Common myeloid progenitor, CD34-positive (primary cell): ENCODE measurements at regions of chr17 and their contacts with region 1.

Region 1: DNA sequence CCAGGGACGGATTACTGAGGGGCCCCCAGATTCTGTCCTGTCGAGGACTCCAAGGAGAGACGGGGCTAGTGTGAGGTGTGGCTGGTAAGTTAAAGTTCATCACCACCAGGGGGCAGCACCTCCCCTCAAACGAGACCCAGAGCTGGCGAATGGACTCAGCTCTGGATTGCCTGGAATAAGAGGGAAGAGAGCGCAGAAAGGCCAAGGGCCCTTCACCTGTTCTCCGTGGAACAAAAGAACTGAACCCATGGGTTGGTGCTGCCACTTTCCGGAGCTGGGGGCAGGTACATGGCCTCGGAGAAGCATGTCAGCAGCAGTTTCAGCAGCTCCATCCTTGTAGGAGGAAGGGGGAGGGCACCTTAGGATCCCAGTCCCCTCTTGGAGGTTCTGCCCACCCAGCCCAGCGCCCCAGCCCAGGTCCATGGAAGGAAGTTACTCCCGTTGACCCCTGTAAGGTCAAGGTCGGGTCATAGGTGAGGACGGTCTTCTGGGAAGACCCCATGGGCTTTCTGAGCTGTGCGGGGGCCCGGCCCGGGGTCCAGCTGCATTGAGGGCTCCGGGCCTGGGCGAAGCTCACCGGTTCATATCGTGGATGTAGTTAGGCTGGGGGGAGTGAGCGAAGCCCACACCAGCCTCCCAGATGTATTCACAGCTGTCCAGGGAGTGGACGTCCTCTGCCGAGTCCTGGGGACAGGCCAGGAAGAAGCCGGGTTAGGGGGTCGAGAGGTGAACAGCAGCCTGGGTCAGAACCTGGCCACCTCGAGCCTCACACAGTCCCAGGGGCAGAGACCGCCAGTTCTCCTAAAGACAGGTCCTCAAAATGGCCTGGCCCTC is 10.7 kb downstream of the HID1 start:
- DNase-seq: peak; percentile 80 to 88 (median 81)
- H3K4me3 ChIP-seq: no peak overlapping the region
- H3K27ac ChIP-seq: no peak overlapping the region
- H3K4me1 ChIP-seq: peaks cover 0 to 6% (median 3%) of the 10 kb centered on the region in 4 experiments
- H3K27me3 ChIP-seq: peaks cover 0 to 4% (median 2%) of the 10 kb centered on the region in 5 experiments

Region 2: DNA sequence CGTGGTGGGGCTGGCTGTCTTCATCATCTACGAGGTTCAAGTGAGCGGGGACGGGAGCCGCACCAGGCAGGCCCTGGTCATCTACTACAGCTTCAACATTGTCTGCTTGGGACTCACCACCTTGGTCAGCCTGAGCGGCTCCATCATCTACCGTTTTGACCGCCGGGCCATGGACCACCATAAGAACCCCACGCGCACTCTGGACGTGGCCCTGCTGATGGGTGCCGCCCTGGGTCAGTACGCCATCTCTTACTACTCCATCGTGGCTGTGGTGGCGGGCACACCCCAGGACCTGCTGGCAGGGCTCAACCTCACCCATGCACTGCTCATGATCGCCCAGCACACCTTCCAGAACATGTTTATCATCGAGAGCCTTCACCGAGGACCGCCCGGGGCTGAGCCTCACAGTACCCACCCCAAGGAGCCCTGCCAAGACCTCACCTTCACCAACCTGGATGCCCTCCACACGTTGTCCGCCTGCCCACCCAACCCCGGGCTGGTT is 31.3 kb before region 1 on chr17:
- CTCF ChIA-PET with region 1: interaction called, 64 read pairs
- POLR2A ChIA-PET with region 1: no interaction called
- DNase-seq: no peak
- H3K4me3 ChIP-seq: no peak overlapping the region
- H3K27ac ChIP-seq: no peak overlapping the region
- H3K4me1 ChIP-seq: peaks cover 0 to 10% (median 1%) of the 10 kb centered on the region in 4 experiments
- H3K27me3 ChIP-seq: peaks cover 0 to 41% (median 24%) of the 10 kb centered on the region in 5 experiments

Region 3: DNA sequence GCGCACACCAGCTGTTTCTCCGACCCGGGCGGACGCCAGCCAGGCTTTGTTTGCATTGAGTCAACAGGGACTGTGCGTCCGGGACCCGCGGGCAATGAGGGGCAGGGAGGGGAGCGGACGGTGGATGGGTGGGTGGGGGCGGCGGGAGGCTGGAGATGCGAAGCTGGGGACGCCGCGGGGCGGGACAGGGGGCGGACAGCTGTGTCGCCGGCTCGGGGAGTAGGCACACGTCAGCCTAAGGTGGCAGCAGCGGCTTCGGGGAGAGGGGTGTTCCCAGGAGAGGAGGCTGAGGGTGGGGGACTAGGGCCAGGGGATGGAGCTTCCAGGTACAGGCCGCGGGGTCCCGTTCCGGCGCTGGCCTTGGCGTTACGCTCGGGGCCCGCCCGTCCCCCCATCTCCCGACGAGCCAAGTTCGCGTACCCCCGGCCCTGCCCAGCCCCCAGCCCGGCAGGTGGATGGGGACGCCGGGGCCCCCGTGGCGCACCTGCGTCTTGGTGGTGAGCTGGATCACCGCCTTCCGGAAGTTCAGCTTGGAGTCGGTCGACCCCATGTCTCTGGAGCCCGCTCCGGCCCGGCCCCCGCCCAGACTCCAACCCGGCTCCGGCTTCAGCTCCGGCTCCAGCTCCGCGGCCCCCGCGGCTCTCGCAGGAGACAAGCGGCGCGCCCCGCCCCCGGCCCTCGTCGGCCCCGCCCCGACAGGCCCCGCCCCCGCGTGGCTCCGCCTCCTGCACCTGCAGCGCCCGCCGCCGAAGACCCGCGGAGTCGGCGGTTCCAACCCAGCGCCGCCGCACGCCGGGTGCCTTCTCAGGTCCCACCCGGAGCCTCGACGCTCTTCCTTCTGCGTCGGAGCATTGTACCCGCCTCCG is 10.5 kb after region 1 on chr17 and contains the start of gene HID1:
- CTCF ChIA-PET with region 1: interaction called, 49 read pairs
- POLR2A ChIA-PET with region 1: interaction called, 3 read pairs
- DNase-seq: peak; percentile 47 to 75 (median 70)
- H3K4me3 ChIP-seq: peak within 1 kb of the TSS; percentile 26 to 78 (median 44)
- H3K27ac ChIP-seq: no peak within 1 kb of the TSS
- H3K4me1 ChIP-seq: peaks cover 0 to 14% (median 8%) of the 10 kb centered on the region in 4 experiments
- H3K27me3 ChIP-seq: peaks cover 0 to 49% (median 17%) of the 10 kb centered on the region in 5 experiments

Region 4: GRCh38 chr17:75024686-75025397 is 63.0 kb after region 1 on chr17:
- CTCF ChIA-PET with region 1: interaction called, 12 read pairs
- POLR2A ChIA-PET with region 1: no interaction called
- DNase-seq: peak in 1 of 3 donors; percentile 26
- H3K4me3 ChIP-seq: no peak overlapping the region
- H3K27ac ChIP-seq: no peak overlapping the region
- H3K4me1 ChIP-seq: no peaks in the 10 kb centered on the region
- H3K27me3 ChIP-seq: no peaks in the 10 kb centered on the region